ENCODE measurements at regions of chr6 and their contacts with region 1.

Region 1: DNA sequence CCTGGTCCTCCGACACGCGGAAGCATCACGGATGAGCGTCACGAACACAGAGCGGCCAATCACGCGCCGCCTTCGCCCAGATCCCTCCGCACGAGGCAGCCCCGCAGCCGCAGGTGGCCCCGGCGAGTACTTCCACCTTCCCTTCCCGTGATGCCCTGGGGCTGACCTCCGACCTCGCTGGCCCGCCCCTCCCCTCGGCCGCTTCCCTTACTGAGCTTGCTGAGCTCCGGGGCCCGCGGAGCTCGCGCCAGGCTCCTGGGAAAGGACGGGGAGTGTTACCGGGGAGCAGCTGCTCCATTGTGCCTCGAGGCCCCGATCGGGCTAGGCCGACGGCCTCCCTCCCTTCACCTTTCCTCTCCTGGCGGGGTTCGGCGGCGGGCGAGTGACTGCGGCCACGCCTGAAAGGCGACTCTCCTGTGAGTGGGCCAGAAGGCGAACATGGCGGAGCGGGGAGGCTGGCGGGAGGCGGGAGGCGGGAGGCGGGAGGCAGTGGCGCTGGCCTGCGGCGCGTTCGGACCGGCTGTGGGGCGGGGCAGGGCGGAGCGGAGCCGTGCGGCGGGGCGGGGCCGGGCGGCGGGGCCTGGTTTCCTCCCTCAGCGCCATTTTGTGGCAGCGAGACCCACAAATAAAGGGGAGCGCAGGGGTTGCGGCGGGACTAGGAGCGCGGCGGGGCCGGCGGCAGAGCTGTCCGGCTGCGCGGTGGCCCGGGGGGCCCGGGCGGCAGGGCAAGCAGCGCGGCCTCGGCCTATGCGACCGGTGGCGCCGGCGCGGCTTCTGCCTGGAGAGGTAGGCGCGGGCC is at the start of gene WTAP:
- DNase-seq: peak; percentile 90 to 96 (median 90)
- H3K4me3 ChIP-seq: peak within 1 kb of the TSS; percentile 82 to 98 (median 97)
- H3K4me3 Mint-ChIP-seq: peak within 1 kb of the TSS; percentile 89 to 92
- H3K27ac ChIP-seq: peak within 1 kb of the TSS; percentile 89 to 100
- H3K27ac Mint-ChIP-seq: peak within 1 kb of the TSS; percentile 95 to 98 (median 97)
- H3K4me1 ChIP-seq: peaks cover 27 to 44% of the 10 kb centered on the region in 2 donors
- H3K4me1 Mint-ChIP-seq: peaks cover 42% of the 10 kb centered on the region
- H3K27me3 ChIP-seq: no peaks in the 10 kb centered on the region
- H3K27me3 Mint-ChIP-seq: no peaks in the 10 kb centered on the region
- CTCF ChIP-seq: no peak
- polyA plus RNA-seq, gene WTAP: 50.8 to 95.9 (median 94.7) TPM

Region 2: GRCh38 chr6:159761873-159762680 is 35.0 kb after region 1 on chr6 and contains the start of gene ACAT2:
- intact Hi-C with region 1: loop called (anchors 5 kb)
- DNase-seq: peak; percentile 89 to 93 (median 91)
- H3K4me3 ChIP-seq: peak within 1 kb of the TSS; percentile 83 to 93 (median 90)
- H3K4me3 Mint-ChIP-seq: peak within 1 kb of the TSS; percentile 92 to 96
- H3K27ac ChIP-seq: peak within 1 kb of the TSS; percentile 95 to 96
- H3K27ac Mint-ChIP-seq: peak within 1 kb of the TSS; percentile 93 to 98 (median 97)
- H3K4me1 ChIP-seq: peaks cover 20 to 29% of the 10 kb centered on the region in 2 donors
- H3K4me1 Mint-ChIP-seq: peaks cover 26% of the 10 kb centered on the region
- H3K27me3 ChIP-seq: no peaks in the 10 kb centered on the region
- H3K27me3 Mint-ChIP-seq: no peaks in the 10 kb centered on the region
- CTCF ChIP-seq: no peak
- polyA plus RNA-seq, gene ACAT2: 3.6 to 24.4 (median 19.5) TPM